CD8-positive, alpha-beta T cell (primary cell): ENCODE measurements at regions of chr3 and their contacts with region 1.

Region 1: GRCh38 chr3:178930116-178930515 is 141.5 kb downstream of the ZMAT3 start:
- DNase-seq: no peak
- ATAC-seq: no peak
- H3K4me3 ChIP-seq: no peak overlapping the region
- H3K4me3 Mint-ChIP-seq: no peak overlapping the region
- H3K27ac ChIP-seq: no peak overlapping the region
- H3K27ac Mint-ChIP-seq: no peak overlapping the region
- H3K4me1 ChIP-seq: no peaks in the 10 kb centered on the region
- H3K4me1 Mint-ChIP-seq: no peaks in the 10 kb centered on the region
- H3K27me3 ChIP-seq: no peaks in the 10 kb centered on the region
- H3K27me3 Mint-ChIP-seq: no peaks in the 10 kb centered on the region
- CTCF ChIP-seq: no peak

Region 2: GRCh38 chr3:178900029-178900646 is 30.0 kb before region 1 on chr3:
- CTCF ChIA-PET with region 1: no interaction called
- POLR2A ChIA-PET with region 1: interaction called, 3 read pairs
- intact Hi-C with region 1: loop called in 1 of 2 experiments (anchors 1 kb)
- DNase-seq: no peak
- ATAC-seq: no peak
- H3K4me3 ChIP-seq: no peak overlapping the region
- H3K4me3 Mint-ChIP-seq: no peak overlapping the region
- H3K27ac ChIP-seq: no peak overlapping the region
- H3K27ac Mint-ChIP-seq: no peak overlapping the region
- H3K4me1 ChIP-seq: no peaks in the 10 kb centered on the region
- H3K4me1 Mint-ChIP-seq: no peaks in the 10 kb centered on the region
- H3K27me3 ChIP-seq: peaks cover 0 to 3% of the 10 kb centered on the region in 2 experiments
- H3K27me3 Mint-ChIP-seq: no peaks in the 10 kb centered on the region
- CTCF ChIP-seq: no peak

Region 3: DNA sequence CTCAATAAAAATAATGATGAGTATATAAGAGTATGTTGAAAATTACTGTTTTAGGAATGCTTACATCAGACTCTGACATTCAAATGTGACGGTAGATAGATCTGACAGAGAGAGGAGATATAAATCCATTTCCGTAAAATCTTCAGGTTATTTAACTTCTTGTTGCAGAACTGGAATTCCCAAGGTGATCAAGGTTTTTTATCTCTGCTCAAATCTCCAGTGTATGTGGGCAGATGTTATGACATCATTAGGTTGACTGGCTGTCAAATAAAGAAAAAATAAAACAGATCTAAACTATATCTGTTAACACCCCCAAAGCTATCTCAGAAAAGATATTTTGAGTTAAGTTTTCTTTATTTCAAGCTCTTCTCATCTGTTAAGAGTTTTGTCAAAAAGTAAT is 13.5 kb after region 1 on chr3:
- CTCF ChIA-PET with region 1: no interaction called
- POLR2A ChIA-PET with region 1: no interaction called
- intact Hi-C with region 1: no loop called
- DNase-seq: no peak
- ATAC-seq: no peak
- H3K4me3 ChIP-seq: no peak overlapping the region
- H3K4me3 Mint-ChIP-seq: no peak overlapping the region
- H3K27ac ChIP-seq: no peak overlapping the region
- H3K27ac Mint-ChIP-seq: no peak overlapping the region
- H3K4me1 ChIP-seq: no peaks in the 10 kb centered on the region
- H3K4me1 Mint-ChIP-seq: no peaks in the 10 kb centered on the region
- H3K27me3 ChIP-seq: no peaks in the 10 kb centered on the region
- H3K27me3 Mint-ChIP-seq: no peaks in the 10 kb centered on the region
- CTCF ChIP-seq: no peak

Region 4: GRCh38 chr3:180048103-180048502 is 1118.0 kb after region 1 on chr3:
- CTCF ChIA-PET with region 1: no interaction called
- POLR2A ChIA-PET with region 1: no interaction called
- intact Hi-C with region 1: loop called in 1 of 2 experiments (anchors 5 kb)
- DNase-seq: no peak
- ATAC-seq: no peak
- H3K4me3 ChIP-seq: no peak overlapping the region
- H3K4me3 Mint-ChIP-seq: no peak overlapping the region
- H3K27ac ChIP-seq: no peak overlapping the region
- H3K27ac Mint-ChIP-seq: no peak overlapping the region
- H3K4me1 ChIP-seq: no peaks in the 10 kb centered on the region
- H3K4me1 Mint-ChIP-seq: no peaks in the 10 kb centered on the region
- H3K27me3 ChIP-seq: no peaks in the 10 kb centered on the region
- H3K27me3 Mint-ChIP-seq: no peaks in the 10 kb centered on the region
- CTCF ChIP-seq: no peak